Heart left ventricle (tissue), 16 donors: ENCODE measurements at regions of chr12 and their contacts with region 1.

Region 1: DNA sequence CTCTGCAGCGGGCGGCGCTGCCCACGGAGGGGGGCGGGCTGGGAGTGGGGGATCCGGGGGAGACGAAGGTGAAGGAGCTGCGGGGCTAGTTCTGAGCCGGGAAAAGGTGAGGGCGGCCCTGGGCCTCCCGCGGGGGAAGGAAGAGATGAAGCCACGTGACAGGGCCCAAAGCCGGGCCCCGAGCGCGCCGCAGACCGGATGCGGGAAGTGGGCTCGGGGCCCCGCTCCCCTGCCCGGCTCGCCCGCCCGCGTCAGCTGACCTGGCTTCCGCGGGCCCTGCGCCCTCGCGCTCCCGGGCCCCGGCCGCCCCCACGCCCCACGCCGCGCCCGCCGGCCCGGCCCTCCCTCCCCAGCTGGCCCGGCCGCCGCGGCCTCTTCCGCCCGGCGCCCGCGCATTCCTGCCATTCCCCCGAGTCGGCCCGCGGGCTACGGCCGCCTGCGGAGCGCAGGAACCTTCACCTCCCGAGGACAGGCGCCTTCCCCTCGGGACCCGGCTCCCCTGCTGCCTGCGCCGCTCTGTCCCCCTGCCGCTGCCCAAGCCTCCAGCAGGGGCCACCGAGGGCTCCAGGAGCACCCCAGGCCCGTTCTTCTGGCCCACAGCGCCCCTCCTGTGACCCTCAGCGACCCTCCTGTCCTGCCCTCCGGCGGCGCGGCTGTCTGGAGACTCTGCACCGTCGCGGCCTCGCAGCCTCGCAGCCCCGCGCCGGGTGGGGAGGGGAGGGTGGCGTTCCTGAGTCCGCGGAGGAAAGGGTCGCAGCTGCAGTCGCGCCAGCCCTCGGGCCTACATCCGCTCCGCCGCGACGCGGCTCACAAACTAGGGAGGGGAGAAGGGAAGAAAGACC is 20.4 kb downstream of the NINJ2 start:
- DNase-seq: peak; percentile 83 to 93 (median 88)
- ATAC-seq: peak; percentile 9 to 78 (median 66)
- H3K4me3 ChIP-seq: peak overlapping the region; percentile 43 to 86 (median 74)
- H3K27ac ChIP-seq: peak overlapping the region; percentile 93 to 100 (median 99)
- H3K4me1 ChIP-seq: peaks cover 7 to 91% (median 54%) of the 10 kb centered on the region in 12 donors
- H3K27me3 ChIP-seq: no peaks in the 10 kb centered on the region
- CTCF ChIP-seq: peak in 11 of 12 donors; percentile 9 to 51 (median 34)
- POLR2A ChIP-seq: peak in 1 of 2 donors; percentile 28

Region 2: DNA sequence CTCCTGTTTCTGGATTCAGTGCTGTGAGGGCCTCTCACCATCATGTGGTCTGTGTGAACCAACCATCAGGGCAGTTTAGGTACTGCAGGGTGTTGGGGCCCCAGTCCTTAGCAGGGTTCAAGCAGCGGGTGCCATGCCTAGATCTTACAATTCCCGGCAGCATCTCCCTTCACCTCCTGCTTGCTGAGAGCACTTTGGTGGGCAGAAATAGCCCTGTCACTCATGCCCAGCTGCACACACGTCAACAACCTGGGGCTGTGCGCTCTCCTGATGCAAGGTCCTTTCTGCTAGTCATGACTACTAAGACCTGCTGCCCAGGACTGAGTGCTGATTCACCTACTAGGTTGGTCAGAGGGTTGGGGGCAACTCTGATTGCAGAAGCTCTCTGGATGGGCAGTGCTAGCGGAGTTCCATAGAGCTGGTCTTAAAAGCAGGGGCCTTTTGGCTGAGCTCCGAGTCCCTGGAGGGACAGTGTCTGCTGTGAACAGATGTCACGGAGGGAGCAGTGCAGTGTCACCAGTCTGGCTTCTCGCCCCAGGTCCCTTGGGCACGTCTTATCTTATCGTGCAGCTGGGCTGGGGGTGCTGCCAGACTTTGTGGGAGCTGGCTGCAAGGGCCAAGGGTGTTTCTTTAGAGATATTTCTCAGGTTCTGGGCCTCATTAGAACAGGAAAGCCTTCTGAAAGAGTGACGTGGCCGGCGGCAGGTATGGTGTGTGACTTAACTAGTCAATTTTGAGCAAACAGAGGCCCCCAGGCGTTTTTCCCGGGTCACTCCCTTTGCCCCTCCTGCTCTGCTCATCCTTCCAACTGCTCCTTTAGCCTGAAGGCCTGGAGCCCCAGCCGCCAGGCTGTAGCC is 51.5 kb before region 1 on chr12:
- intact Hi-C with region 1: loop called in 2 of 10 experiments (anchors 5 kb)
- DNase-seq: peak; percentile 86 to 97 (median 91)
- ATAC-seq: peak; percentile 91 to 93 (median 92)
- H3K4me3 ChIP-seq: peak overlapping the region in 1 of 12 donors; percentile 0
- H3K27ac ChIP-seq: peak overlapping the region; percentile 39 to 90 (median 86)
- H3K4me1 ChIP-seq: peaks cover 0 to 32% (median 20%) of the 10 kb centered on the region in 12 donors
- H3K27me3 ChIP-seq: no peaks in the 10 kb centered on the region
- CTCF ChIP-seq: peak in 8 of 12 donors; percentile 14 to 61 (median 30)
- POLR2A ChIP-seq: no peak

Region 3: GRCh38 chr12:607526-608001 is 35.3 kb before region 1 on chr12:
- intact Hi-C with region 1: loop called in 4 of 10 experiments (anchors 2 to 5 kb)
- DNase-seq: peak; percentile 82 to 88 (median 84)
- ATAC-seq: peak; percentile 63 to 91 (median 64)
- H3K4me3 ChIP-seq: no peak overlapping the region
- H3K27ac ChIP-seq: peak overlapping the region; percentile 65 to 82 (median 76)
- H3K4me1 ChIP-seq: peaks cover 6 to 82% (median 36%) of the 10 kb centered on the region in 12 donors
- H3K27me3 ChIP-seq: no peaks in the 10 kb centered on the region
- CTCF ChIP-seq: no peak
- POLR2A ChIP-seq: no peak

Region 4: GRCh38 chr12:622416-622815 is 20.4 kb before region 1 on chr12:
- intact Hi-C with region 1: loop called in 1 of 10 experiments (anchors 1 kb)
- DNase-seq: no peak
- ATAC-seq: peak in 2 of 4 donors; percentile 23 to 77
- H3K4me3 ChIP-seq: no peak overlapping the region
- H3K27ac ChIP-seq: peak overlapping the region; percentile 55 to 91 (median 76)
- H3K4me1 ChIP-seq: peaks cover 5 to 66% (median 37%) of the 10 kb centered on the region in 12 donors
- H3K27me3 ChIP-seq: no peaks in the 10 kb centered on the region
- CTCF ChIP-seq: no peak
- POLR2A ChIP-seq: no peak

Region 5: DNA sequence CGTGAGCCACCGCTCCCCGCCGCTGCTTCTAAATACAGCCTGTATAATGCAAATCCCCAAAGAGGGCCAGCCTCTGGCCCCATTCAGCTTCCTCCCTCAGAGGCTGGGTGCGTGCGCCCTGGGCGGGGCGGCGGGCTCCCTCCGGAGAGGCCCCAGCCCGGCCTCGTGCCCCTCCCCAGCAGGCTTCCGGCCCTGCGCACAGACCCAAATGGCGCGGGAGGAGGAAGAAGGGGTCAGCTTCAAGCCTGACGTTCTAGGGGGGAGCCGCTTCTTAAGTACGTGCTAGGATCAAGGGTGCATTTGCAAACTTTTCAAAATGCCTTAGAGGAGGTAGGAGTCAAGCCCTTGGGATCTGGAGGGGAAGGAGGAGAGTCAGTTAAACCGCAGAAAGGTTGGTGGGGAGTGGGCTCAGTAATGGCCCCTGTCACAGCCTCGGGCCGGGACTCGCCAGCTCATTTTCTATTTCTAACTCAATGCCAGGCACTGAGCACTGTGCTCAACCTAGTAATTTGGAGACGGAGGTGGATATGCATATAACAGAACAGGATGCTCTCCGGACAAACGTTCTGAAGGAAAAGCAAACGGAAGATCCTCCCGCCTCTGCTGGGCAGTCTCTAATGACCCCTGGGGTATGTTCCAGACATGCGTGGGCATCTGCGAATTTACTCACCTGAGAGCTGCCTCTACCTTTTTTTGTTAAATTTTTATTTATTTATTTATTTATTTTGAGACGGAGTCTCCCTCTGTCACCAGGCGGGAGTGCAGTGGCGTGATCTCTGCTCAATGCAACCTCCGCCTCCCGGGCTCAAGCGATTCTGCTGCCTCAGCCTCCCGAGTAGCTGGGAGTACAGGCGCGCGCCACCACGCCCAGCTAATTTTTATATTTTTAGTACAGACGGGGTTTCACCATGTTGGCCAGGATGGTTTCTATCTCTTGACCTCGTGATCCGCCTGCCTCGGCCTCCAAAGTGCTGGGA is 11.9 kb before region 1 on chr12:
- intact Hi-C with region 1: loop called in 1 of 10 experiments (anchors 2 kb)
- DNase-seq: peak; percentile 62 to 91 (median 83)
- ATAC-seq: peak; percentile 52 to 87 (median 70)
- H3K4me3 ChIP-seq: peak overlapping the region in 9 of 12 donors; percentile 25 to 67 (median 40)
- H3K27ac ChIP-seq: peak overlapping the region; percentile 76 to 93 (median 87)
- H3K4me1 ChIP-seq: peaks cover 0 to 77% (median 44%) of the 10 kb centered on the region in 12 donors
- H3K27me3 ChIP-seq: no peaks in the 10 kb centered on the region
- CTCF ChIP-seq: no peak
- POLR2A ChIP-seq: peak in 1 of 2 donors; percentile 46

Region 6: DNA sequence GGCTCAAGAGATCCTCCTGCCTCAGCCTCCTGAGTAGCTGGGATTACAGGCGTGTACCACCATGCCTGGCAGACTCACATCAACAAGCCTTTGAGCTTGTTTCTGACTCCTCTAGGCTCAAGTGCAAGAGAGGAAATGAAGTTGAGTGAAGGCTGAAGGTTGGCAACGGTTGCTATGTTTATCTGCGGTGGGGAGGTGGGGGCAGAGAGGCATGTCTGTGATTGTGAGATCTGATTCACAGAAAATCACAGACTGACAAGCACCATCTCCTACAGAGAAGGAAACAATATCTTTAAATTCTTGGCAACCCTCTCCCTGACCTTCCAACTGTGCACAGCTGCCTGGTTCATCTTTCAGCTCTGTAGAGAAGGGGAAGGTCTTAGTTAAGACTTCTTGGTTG is 42.5 kb after region 1 on chr12:
- intact Hi-C with region 1: loop called in 1 of 10 experiments (anchors 2 kb)
- DNase-seq: peak in 1 of 5 donors; percentile 29
- ATAC-seq: peak in 3 of 4 donors; percentile 29 to 47 (median 32)
- H3K4me3 ChIP-seq: no peak overlapping the region
- H3K27ac ChIP-seq: peak overlapping the region in 1 of 12 donors; percentile 59
- H3K4me1 ChIP-seq: peaks cover 0 to 29% (median 8%) of the 10 kb centered on the region in 12 donors
- H3K27me3 ChIP-seq: no peaks in the 10 kb centered on the region
- CTCF ChIP-seq: no peak
- POLR2A ChIP-seq: no peak

Region 7: DNA sequence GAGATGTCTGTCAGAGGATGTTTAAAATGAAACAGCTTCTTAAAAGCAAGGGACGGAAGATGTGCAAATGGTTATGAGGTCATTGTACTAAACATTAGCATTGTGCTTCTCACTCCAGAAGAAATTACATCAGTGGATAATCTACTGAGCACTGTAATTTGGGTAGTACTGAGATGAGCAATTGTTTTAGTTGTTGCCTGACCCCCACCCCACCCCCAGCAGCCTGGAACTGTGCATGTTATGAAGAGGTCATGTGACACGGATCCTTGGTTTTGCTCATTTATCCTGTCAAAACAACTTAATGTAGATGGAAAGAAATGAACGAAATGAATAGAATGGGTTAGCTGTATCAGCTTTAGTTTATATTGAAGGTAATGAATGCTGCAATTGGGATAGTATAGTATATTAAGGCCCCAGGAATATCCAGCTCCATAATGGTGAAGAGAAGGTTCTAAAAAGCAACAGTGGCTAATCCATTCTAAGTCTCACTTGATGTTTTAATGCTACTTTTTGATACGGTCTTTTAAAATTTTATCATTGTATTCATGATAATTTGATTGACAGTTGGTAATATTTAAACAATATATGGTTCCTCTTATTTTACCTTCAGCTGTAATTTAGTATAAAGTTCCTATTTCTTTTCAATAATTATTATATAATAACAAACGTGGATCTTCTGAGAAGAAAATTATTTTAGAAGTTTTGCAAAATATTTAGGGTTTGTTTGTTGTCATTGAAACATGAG is 168.0 kb after region 1 on chr12:
- intact Hi-C with region 1: loop called in 6 of 10 experiments (anchors 10 kb)
- DNase-seq: no peak
- ATAC-seq: peak in 2 of 4 donors; percentile 11 to 21
- H3K4me3 ChIP-seq: no peak overlapping the region
- H3K27ac ChIP-seq: peak overlapping the region in 1 of 12 donors; percentile 13
- H3K4me1 ChIP-seq: peaks cover 9 to 71% (median 44%) of the 10 kb centered on the region in 12 donors
- H3K27me3 ChIP-seq: no peaks in the 10 kb centered on the region
- CTCF ChIP-seq: no peak
- POLR2A ChIP-seq: no peak